Prostate gland (tissue), 2 donors: ENCODE measurements at regions of chr4 and their contacts with region 1.

Region 1: GRCh38 chr4:70901984-70902576 is at the start of gene MOB1B:
- DNase-seq: peak; percentile 87
- H3K4me3 ChIP-seq: peak within 1 kb of the TSS; percentile 72 to 91
- H3K27ac ChIP-seq: peak within 1 kb of the TSS; percentile 83 to 89
- H3K4me1 ChIP-seq: no peaks in the 10 kb centered on the region
- H3K27me3 ChIP-seq: no peaks in the 10 kb centered on the region
- CTCF ChIP-seq: peak in 3 of 4 experiments; percentile 12 to 43 (median 43)
- POLR2A ChIP-seq: peak; percentile 43
- total RNA-seq, gene MOB1B: 13.6 to 19.7 TPM

Region 2: GRCh38 chr4:70559211-70559830 is 342.8 kb before region 1 on chr4:
- intact Hi-C with region 1: no loop called
- DNase-seq: peak; percentile 38
- H3K4me3 ChIP-seq: no peak overlapping the region
- H3K27ac ChIP-seq: no peak overlapping the region
- H3K4me1 ChIP-seq: no peaks in the 10 kb centered on the region
- H3K27me3 ChIP-seq: no peaks in the 10 kb centered on the region
- CTCF ChIP-seq: peak in 3 of 4 experiments; percentile 36 to 72 (median 65)
- POLR2A ChIP-seq: no peak

Region 3: DNA sequence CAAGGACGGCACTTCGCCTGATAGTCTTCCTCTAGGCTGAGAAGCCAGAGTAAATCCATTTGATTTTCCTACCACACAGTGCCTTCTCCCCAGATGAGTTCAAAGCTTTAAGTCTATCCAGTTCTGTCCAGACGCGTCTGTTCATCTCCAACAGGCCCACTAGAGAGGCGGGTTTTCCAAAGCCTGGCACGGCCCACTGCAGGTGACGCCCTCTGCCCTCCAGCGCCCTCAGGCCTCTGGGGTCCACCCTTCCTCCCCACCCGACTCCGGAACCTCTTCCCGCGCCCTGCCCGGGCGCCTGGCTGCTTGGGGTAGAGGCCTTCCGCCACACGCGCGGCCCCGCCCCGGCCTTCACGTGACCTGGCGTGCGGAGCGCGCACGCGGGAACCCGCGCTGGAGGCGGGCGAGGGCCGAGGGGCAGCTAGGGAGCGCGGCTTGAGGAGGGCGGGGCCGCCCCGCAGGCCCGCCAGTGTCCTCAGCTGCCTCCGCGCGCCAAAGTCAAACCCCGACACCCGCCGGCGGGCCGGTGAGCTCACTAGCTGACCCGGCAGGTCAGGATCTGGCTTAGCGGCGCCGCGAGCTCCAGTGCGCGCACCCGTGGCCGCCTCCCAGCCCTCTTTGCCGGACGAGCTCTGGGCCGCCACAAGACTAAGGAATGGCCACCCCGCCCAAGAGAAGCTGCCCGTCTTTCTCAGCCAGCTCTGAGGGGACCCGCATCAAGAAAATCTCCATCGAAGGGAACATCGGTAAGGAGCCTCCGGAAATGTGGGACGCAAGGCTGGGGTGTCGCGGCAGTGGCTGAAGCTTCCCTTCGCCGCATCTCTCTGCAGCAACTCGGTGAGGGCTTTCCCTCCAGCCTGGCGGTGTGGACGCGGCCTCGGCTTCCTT is 91.3 kb after region 1 on chr4 and contains the start of gene DCK:
- intact Hi-C with region 1: loop called (anchors 10 kb)
- DNase-seq: peak; percentile 86
- H3K4me3 ChIP-seq: peak within 1 kb of the TSS; percentile 68 to 73
- H3K27ac ChIP-seq: peak within 1 kb of the TSS; percentile 84 to 89
- H3K4me1 ChIP-seq: no peaks in the 10 kb centered on the region
- H3K27me3 ChIP-seq: no peaks in the 10 kb centered on the region
- CTCF ChIP-seq: peak in 1 of 4 experiments; percentile 34
- POLR2A ChIP-seq: peak; percentile 73
- total RNA-seq, gene DCK: 14.0 to 17.0 TPM

Region 4: DNA sequence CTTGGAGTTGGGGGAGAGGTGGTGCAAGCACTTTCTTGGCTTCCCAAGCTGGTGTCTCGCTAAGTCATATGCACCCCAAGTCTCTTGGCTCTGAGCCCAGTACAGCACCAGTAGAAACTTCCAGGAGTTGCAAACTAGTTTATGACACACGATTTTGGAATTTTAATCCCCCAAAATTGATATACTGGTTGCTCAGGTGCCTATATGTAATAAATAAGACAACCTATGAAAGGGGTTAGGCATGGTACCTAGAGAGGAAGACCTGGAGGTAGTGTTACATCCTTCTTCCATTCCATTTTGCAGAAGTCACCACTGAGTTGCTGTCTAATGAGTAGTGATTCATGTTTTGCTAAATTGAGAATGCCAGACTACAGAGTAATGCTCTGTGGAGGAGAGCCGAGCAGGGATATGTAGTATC is 432.4 kb after region 1 on chr4:
- intact Hi-C with region 1: no loop called
- DNase-seq: no peak
- H3K4me3 ChIP-seq: no peak overlapping the region
- H3K27ac ChIP-seq: no peak overlapping the region
- H3K4me1 ChIP-seq: no peaks in the 10 kb centered on the region
- H3K27me3 ChIP-seq: no peaks in the 10 kb centered on the region
- CTCF ChIP-seq: no peak
- POLR2A ChIP-seq: no peak